PC-3 (cell line): ENCODE measurements at regions of chr6 and their contacts with region 1.

Region 1: GRCh38 chr6:137136065-137136464 is 37.4 kb downstream of the IL22RA2 start:
- DNase-seq: peak; percentile 24
- ATAC-seq: no peak
- H3K4me3 ChIP-seq: no peak overlapping the region
- H3K27ac ChIP-seq: no peak overlapping the region
- H3K4me1 ChIP-seq: no peaks in the 10 kb centered on the region
- H3K27me3 ChIP-seq: no peaks in the 10 kb centered on the region
- CTCF ChIP-seq: peak; percentile 43

Region 2: DNA sequence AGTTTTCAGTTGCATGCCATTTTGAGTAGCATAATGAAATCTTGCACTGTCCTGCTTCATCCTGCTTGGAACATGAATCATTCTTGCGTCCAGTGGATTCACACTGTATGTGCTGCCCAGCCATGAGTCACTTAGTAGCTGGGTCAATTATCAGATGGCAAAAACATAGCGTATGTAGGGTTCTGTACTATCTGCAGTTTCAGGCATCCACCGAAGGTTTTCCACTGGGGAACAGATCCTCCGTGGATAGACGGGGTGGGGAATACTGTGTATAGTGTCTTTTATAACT is 24.1 kb before region 1 on chr6:
- CTCF ChIA-PET with region 1: no interaction called
- POLR2A ChIA-PET with region 1: no interaction called
- intact Hi-C with region 1: no loop called
- DNase-seq: peak; percentile 54
- ATAC-seq: peak; percentile 81
- H3K4me3 ChIP-seq: no peak overlapping the region
- H3K27ac ChIP-seq: no peak overlapping the region
- H3K4me1 ChIP-seq: peaks cover 4% of the 10 kb centered on the region; the same call in 1 of the 2 replicates
- H3K27me3 ChIP-seq: no peaks in the 10 kb centered on the region
- CTCF ChIP-seq: no peak

Region 3: DNA sequence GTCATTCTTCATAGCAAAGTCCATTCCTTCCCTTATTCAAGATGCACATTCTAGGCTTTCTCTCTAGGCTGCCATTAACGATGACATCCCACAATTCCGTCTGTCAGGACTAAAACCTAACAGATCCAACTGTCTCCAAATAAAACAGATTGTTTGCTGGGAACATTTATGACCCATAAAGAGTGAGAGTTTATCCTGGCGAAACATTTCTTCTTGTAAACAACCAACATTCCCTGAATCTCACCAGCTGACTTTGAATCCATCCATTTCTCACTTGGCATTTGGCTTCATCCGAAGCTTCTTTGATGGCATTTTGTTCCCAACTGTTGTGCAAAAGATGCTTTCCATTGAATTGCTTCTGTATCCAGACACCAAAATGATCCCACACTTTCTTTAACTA is 265.0 kb after region 1 on chr6:
- CTCF ChIA-PET with region 1: no interaction called
- POLR2A ChIA-PET with region 1: interaction called, 16 read pairs
- intact Hi-C with region 1: no loop called
- DNase-seq: no peak
- ATAC-seq: no peak
- H3K4me3 ChIP-seq: no peak overlapping the region
- H3K27ac ChIP-seq: no peak overlapping the region
- H3K4me1 ChIP-seq: no peaks in the 10 kb centered on the region
- H3K27me3 ChIP-seq: peaks cover 13% of the 10 kb centered on the region; the same call in 1 of the 2 replicates
- CTCF ChIP-seq: no peak